MCF 10A (cell line): ENCODE measurements at regions of chr20 and their contacts with region 1.

Region 1: DNA sequence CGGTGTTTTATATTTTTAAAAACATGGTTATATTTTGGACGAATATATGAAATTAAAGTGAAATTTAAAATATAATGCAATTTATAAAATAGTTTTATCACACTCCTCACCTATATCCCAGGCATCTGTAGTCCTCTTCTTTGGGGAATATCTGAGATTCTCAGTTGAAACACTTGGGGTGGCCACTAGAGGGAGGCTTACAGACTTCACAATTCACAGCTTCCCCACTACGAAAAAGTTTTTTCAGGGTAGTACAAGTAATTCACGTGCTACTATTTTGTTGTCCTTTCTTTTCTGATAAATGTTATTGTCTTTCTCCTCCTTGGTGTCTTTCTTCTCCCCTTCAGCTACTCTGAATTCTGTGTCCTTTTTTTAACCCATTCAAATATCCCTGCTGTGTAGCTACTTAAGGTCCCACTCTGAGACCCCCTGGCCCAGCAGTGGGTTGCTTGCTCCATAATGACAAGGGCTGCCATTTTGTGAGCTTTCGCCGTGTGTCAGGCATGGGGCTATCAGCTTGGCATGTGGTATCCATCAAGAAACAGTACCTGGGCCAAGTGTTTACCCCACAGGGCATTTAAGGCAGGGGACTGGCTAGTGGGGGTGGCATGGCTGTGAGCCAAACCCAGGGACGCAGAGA is 43.6 kb upstream of the PHACTR3 start:
- DNase-seq: peak; percentile 43
- H3K4me3 Mint-ChIP-seq: no peak overlapping the region
- H3K27ac Mint-ChIP-seq: no peak overlapping the region
- H3K4me1 Mint-ChIP-seq: peaks cover 5% of the 10 kb centered on the region
- H3K27me3 Mint-ChIP-seq: peaks cover 43% of the 10 kb centered on the region
- CTCF ChIP-seq: peak; percentile 59

Region 2: GRCh38 chr20:59547596-59547995 is 13.1 kb before region 1 on chr20:
- CTCF ChIA-PET with region 1: interaction called, 17 read pairs
- POLR2A ChIA-PET with region 1: interaction called, 5 read pairs
- intact Hi-C with region 1: no loop called
- DNase-seq: no peak
- H3K4me3 Mint-ChIP-seq: no peak overlapping the region
- H3K27ac Mint-ChIP-seq: no peak overlapping the region
- H3K4me1 Mint-ChIP-seq: no peaks in the 10 kb centered on the region
- H3K27me3 Mint-ChIP-seq: peaks cover 83% of the 10 kb centered on the region
- CTCF ChIP-seq: no peak

Region 3: DNA sequence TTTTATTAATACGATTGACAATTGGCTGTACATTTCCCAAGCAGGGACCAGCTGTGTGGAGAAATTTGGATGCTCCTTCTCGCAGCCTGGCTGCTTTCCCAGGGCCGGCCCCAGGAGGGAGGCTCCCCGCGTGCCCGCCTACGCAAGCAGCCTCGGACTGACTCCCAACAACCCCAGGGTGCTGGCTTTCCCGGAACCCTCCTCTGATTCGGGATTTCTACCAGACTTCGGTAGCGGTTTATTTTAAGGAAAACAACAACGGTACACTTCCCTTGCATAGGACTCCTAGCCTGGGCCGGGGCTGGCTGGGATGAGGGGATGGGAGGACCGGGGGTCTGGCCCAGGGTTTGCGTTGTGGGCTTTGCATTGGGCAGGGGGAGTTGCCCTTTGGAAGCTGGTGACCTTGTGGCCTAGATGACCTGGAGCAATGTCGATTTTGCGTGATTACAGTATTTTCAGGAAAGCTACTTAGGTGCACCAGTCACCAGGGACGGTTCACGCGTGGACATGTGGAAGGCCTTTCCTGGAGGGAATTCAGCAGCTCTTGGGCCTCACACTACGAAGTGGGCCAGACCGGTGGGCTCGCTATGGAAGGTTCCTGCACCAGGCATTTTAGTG is 22.8 kb after region 1 on chr20:
- CTCF ChIA-PET with region 1: interaction called, 11 read pairs
- POLR2A ChIA-PET with region 1: no interaction called
- intact Hi-C with region 1: no loop called
- DNase-seq: peak; percentile 47
- H3K4me3 Mint-ChIP-seq: no peak overlapping the region
- H3K27ac Mint-ChIP-seq: no peak overlapping the region
- H3K4me1 Mint-ChIP-seq: no peaks in the 10 kb centered on the region
- H3K27me3 Mint-ChIP-seq: peaks cover 41% of the 10 kb centered on the region
- CTCF ChIP-seq: no peak

Region 4: DNA sequence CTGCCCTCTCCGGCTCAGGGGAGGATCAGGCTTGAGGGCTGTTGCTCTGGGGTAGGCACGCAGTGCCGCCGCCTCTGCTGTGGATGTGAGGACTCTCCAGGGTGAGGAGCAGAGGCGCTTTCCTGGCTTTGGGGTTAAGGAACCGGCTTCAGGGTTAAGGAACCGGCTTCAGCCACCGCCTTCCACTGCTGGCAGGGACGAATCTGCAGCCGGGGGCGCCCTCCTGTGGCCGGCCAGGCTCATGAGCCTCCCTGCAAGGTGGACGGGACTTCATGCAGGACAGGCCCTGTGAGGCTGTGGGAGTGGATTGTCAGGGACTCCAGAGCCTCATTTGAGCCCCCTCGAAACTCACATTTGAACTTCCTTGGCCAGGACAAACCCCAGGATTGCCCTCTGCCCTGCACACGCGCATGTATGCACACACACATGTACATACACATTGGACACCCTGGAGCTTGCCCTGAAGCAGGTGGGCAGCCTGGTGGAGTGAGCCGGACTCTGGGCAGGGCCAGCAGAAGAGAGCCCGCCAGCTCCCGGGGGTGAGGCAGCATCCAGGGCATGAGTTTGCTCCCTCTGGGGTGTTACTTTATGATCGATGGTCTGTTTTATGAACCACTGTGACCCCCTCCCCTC is 190.5 kb after region 1 on chr20:
- CTCF ChIA-PET with region 1: interaction called, 10 read pairs
- POLR2A ChIA-PET with region 1: no interaction called
- intact Hi-C with region 1: no loop called
- DNase-seq: peak; percentile 56
- H3K4me3 Mint-ChIP-seq: no peak overlapping the region
- H3K27ac Mint-ChIP-seq: no peak overlapping the region
- H3K4me1 Mint-ChIP-seq: no peaks in the 10 kb centered on the region
- H3K27me3 Mint-ChIP-seq: peaks cover 98% of the 10 kb centered on the region
- CTCF ChIP-seq: peak; percentile 88

Region 5: GRCh38 chr20:59764037-59764436 is 203.3 kb after region 1 on chr20:
- CTCF ChIA-PET with region 1: no interaction called
- POLR2A ChIA-PET with region 1: no interaction called
- intact Hi-C with region 1: no loop called
- DNase-seq: no peak
- H3K4me3 Mint-ChIP-seq: no peak overlapping the region
- H3K27ac Mint-ChIP-seq: no peak overlapping the region
- H3K4me1 Mint-ChIP-seq: no peaks in the 10 kb centered on the region
- H3K27me3 Mint-ChIP-seq: peaks cover 64% of the 10 kb centered on the region
- CTCF ChIP-seq: no peak